Activated CD4-positive, alpha-beta memory T cell treated with anti-CD3 and anti-CD28 coated beads for 36 hours (primary cell): ENCODE measurements at regions of chr13 and their contacts with region 1.

Region 1: DNA sequence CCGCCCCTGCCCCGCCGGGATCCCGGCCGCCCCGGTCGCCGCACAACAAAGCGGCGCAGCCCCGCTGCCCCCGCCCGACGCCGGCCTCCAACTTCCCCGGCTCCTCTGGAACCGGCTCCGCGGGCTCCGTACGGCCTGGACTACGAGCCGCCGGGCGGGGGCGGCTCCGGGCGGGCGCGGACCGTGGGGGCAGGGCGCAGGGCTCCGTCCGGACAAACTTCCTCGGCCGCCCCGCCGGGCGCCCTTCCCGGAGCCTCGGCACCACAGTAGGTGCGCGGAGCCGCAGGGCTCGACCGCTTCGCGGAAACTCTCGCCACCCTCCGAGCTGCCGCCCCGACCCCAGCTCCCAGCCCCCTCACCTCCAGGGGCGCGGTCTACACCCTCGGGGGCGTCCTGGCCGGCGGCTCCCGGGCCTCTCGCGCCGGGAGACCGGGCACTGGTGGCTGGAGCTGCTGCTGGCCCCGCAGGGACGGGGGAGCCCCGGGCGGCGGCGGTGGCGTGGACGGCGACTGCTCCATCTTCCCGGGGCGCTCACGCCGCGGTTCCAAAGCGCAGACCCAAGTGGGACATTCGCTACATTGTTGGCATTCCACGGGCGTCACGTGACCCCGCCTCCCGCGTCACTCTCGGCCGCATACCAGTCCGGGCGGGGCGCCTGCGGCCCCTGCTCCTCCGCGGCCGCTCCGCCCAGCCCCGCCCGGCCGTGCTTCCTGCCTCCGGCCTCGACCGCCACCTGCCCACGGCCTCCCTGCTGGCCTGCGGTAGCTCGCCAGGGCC is at the start of gene LATS2:
- DNase-seq: peak; percentile 75
- H3K4me3 Mint-ChIP-seq: peak within 1 kb of the TSS; percentile 57
- H3K27ac Mint-ChIP-seq: no peak within 1 kb of the TSS
- H3K4me1 Mint-ChIP-seq: peaks cover 3% of the 10 kb centered on the region
- H3K27me3 Mint-ChIP-seq: peaks cover 19% of the 10 kb centered on the region
- total RNA-seq, gene LATS2: 4.0 to 6.8 TPM

Region 2: DNA sequence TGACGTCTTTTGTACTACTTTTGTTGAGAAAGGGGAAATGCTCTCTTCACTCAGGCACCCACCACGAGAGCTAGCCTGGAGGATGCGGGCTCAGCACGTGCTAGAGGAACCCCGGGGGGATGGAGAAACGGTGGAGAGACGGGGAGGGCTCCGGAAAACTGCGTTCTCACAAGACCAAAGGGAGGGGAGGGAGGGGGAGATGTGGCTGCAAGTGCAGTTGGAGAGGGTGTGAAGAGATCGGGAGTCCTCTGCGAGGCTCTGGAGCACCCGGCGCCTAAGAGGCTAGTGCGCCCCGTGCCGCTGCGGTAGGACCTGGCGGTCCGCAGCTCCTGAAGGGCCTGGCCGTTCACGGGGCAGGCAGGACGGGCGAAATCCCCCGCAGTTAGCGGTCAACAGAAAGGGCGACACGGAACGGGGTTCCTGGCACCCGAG is 115.2 kb before region 1 on chr13:
- CTCF ChIA-PET with region 1: interaction called, 3 read pairs
- POLR2A ChIA-PET with region 1: no interaction called
- intact Hi-C with region 1: loop called (anchors 10 kb)
- DNase-seq: peak; percentile 12
- H3K4me3 Mint-ChIP-seq: no peak overlapping the region
- H3K27ac Mint-ChIP-seq: no peak overlapping the region
- H3K4me1 Mint-ChIP-seq: peaks cover 5% of the 10 kb centered on the region
- H3K27me3 Mint-ChIP-seq: peaks cover 39% of the 10 kb centered on the region

Region 3: DNA sequence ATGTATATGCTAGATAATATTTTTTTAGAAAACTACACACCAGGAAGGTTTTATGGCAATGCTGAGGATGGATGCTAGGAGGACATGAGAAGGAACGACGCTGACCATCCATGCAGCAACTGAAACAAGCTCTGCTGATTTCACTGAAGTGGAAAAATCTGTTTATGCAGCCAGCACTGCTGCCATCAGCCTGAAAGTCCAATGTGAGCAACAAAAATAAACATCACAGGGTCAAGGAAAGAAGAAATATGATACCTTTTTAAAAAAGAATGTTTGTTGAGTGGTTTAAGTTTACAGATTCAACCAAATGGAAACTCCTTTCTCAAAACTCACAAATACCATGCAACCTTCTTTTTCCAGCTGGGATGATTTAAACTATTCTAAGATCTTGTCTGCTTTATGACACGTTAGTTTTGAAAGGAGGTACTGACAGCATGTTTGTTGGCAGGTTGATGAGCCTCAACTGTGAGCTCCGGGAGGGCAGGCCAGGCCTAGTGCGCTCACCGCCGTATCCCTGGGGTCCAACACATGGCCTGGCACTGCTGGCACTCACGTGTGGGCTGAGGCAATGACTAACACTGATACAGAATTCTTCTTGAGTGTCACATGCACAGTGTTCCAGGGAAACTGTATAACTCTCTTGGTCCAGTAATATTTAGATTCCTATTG is 46.5 kb before region 1 on chr13:
- CTCF ChIA-PET with region 1: no interaction called
- POLR2A ChIA-PET with region 1: no interaction called
- intact Hi-C with region 1: loop called (anchors 10 kb)
- DNase-seq: no peak
- H3K4me3 Mint-ChIP-seq: no peak overlapping the region
- H3K27ac Mint-ChIP-seq: no peak overlapping the region
- H3K4me1 Mint-ChIP-seq: peaks cover 28% of the 10 kb centered on the region
- H3K27me3 Mint-ChIP-seq: no peaks in the 10 kb centered on the region